IMR-90 (cell line): ENCODE measurements at regions of chr11 and their contacts with region 1.

Region 1: DNA sequence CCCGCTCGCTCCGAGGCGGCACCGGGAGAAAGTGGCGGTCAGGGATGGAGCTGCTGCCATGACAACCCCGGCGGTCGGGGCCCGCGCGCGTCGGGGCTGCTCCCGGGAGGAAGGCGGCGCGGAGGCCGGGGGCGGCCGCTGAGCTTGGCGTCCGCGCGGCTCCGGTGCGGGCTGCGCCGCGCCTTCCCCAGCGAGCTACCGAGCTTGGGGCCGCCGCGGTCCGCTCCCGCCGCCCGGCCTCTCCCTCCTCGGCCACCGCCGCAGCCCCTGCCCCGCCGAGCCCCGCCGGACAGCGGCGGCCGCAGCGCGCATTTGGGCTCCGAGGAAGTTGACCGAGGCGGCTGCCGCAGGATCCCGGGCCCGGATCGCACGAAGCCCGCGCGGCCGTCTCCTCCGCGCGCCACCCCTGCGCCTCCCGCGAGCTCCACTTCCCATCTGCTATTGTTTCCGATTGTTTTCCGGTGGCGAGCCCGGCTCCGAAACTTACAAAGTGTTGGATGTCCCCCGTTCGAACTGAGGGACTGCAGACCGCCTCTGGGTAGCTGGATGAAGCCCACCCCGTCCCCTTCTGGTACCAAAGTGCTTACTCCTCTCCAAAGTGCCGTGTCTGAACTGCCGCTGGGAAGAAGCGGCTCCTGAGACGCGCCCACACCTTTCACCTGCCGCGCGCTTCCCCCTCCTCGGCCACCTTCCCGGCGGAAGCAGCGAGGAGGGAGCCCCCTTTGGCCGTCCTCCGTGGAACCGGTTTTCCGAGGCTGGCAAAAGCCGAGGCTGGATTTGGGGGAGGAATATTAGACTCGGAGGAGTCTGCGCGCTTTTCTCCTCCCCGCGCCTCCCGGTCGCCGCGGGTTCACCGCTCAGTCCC is 540.3 kb downstream of the NTM start:
- DNase-seq: peak; percentile 43
- ATAC-seq: peak; percentile 60
- H3K4me3 ChIP-seq: peak overlapping the region; percentile 72
- H3K27ac ChIP-seq: peak overlapping the region; percentile 26
- H3K4me1 ChIP-seq: peaks cover 5% of the 10 kb centered on the region
- H3K27me3 ChIP-seq: no peaks in the 10 kb centered on the region
- CTCF ChIP-seq: no peak
- POLR2A ChIP-seq: no peak
- RAD21 ChIP-seq: no peak; the same call in 1 of the 2 replicates

Region 2: GRCh38 chr11:131694526-131695424 is 216.0 kb before region 1 on chr11:
- CTCF ChIA-PET with region 1: interaction called, 6 read pairs
- POLR2A ChIA-PET with region 1: no interaction called
- dilution Hi-C with region 1: no loop called
- in situ Hi-C with region 1: no loop called
- intact Hi-C with region 1: loop called (anchors 1 kb)
- DNase-seq: peak; percentile 69
- ATAC-seq: peak; percentile 99
- H3K4me3 ChIP-seq: no peak overlapping the region
- H3K27ac ChIP-seq: no peak overlapping the region
- H3K4me1 ChIP-seq: 0 out of 2 replicates have a peak, but pooled peaks cover 2% of the 10 kb centered on the region
- H3K27me3 ChIP-seq: no peaks in the 10 kb centered on the region; the same call in 1 of the 2 replicates
- CTCF ChIP-seq: peak; percentile 99
- POLR2A ChIP-seq: no peak
- RAD21 ChIP-seq: peak; percentile 92

Region 3: GRCh38 chr11:131889146-131889577 is 21.6 kb before region 1 on chr11:
- CTCF ChIA-PET with region 1: interaction called, 3 read pairs
- POLR2A ChIA-PET with region 1: no interaction called
- dilution Hi-C with region 1: no loop called
- in situ Hi-C with region 1: no loop called
- intact Hi-C with region 1: loop called (anchors 2 kb)
- DNase-seq: peak; percentile 95
- ATAC-seq: peak; percentile 60
- H3K4me3 ChIP-seq: no peak overlapping the region
- H3K27ac ChIP-seq: peak overlapping the region; percentile 68
- H3K4me1 ChIP-seq: peaks cover 19% of the 10 kb centered on the region
- H3K27me3 ChIP-seq: no peaks in the 10 kb centered on the region
- CTCF ChIP-seq: no peak
- POLR2A ChIP-seq: no peak
- RAD21 ChIP-seq: no peak

Region 4: DNA sequence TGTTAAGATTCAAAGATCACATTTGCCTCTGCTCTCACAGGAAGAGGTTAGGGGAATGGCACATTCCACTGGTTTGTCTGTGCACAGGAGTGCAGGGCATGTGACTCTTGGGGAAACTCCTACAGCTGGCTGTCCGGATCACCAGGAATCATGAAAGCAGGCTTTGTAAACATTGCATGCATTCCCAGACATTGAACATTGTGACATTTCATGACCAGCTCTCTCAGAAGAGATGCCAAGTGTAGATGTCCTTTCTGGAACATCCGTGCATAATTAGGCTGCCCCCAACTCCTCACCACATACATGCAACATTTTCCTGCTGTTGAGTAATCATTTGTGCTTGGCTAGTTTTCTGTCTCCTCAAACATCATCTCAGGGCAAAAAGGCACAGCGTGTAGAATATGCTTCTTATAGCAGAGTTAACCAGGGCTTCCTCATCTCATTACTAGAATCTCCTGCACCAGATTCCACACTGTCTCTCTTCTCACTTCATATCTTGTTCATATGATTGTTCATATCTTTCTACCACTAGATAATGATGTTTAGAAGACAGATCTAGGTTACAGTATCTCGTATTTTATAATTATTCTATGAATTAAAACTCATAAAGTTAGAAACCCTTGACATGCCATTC is 154.3 kb after region 1 on chr11:
- CTCF ChIA-PET with region 1: interaction called, 3 read pairs
- POLR2A ChIA-PET with region 1: no interaction called
- dilution Hi-C with region 1: no loop called
- in situ Hi-C with region 1: no loop called
- intact Hi-C with region 1: loop called (anchors 5 kb)
- DNase-seq: peak; percentile 99
- ATAC-seq: peak; percentile 80
- H3K4me3 ChIP-seq: no peak overlapping the region
- H3K27ac ChIP-seq: peak overlapping the region; percentile 27; the same call in 1 of the 2 replicates
- H3K4me1 ChIP-seq: peaks cover 26% of the 10 kb centered on the region
- H3K27me3 ChIP-seq: no peaks in the 10 kb centered on the region
- CTCF ChIP-seq: no peak
- POLR2A ChIP-seq: peak; percentile 68
- RAD21 ChIP-seq: peak; percentile 24; the same call in 1 of the 2 replicates

Region 5: DNA sequence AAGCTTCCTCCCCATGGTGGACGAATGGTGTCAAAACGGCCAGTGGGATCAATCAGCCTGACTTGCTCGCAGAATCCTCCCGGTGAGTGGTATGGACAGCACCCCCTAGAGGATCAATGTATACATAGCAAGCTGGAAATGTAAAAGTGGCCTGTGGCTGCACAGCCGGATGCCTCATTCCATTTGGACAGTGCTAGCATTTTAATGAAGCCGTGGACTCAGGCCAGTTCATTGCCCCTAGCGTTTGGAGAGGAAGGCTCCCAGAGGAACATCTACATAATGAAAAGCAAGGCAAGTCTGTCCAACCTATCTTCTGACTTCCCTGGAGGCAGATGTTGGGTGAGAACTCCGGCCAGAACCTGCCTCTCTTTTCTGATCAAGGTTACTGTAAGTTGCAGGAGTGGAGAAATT is 402.0 kb after region 1 on chr11:
- CTCF ChIA-PET with region 1: no interaction called
- POLR2A ChIA-PET with region 1: no interaction called
- dilution Hi-C with region 1: no loop called
- in situ Hi-C with region 1: no loop called
- intact Hi-C with region 1: loop called (anchors 2 kb)
- DNase-seq: peak; percentile 46
- ATAC-seq: peak; percentile 93
- H3K4me3 ChIP-seq: no peak overlapping the region
- H3K27ac ChIP-seq: no peak overlapping the region
- H3K4me1 ChIP-seq: peaks cover 5% of the 10 kb centered on the region
- H3K27me3 ChIP-seq: no peaks in the 10 kb centered on the region
- CTCF ChIP-seq: peak; percentile 56
- POLR2A ChIP-seq: no peak
- RAD21 ChIP-seq: no peak